Heart left ventricle (tissue), 16 donors: ENCODE measurements at regions of chr1 and their contacts with region 1.

Region 1: DNA sequence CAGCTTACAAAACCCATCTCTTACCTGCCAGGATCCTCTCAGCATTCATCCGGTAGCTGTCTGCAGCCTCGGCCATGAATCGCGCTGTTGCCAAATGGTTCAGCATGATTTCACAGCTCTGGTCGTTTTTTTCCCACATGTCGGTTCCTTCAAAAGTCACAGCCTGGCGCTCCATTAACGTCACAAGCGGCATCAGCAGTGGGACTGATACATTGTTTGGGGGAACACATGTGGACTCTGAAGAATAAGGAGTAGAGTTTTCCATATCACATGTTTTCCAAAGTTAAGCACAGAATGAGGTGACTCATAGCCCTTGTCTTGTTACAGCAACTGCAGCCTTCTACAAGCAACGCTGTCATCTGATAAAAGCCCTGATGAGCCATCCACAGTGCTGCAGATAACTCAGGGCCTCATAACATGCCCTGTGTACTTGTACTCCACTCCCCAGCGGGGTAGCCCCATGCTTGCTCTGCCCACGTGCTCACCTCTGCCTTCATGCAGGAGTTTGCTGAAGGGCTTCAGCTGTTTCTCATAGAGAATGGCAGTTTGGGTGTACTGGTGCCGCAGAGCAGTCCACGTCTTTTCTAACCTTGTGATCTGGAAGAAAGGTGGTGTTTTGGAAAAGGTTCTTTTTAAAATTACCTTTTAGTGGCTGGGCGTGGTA is 114.2 kb downstream of the BCAR3 start:
- DNase-seq: peak in 1 of 5 donors; percentile 74
- ATAC-seq: peak; percentile 62 to 85 (median 76)
- H3K4me3 ChIP-seq: no peak overlapping the region
- H3K27ac ChIP-seq: peak overlapping the region in 10 of 12 donors; percentile 24 to 76 (median 56)
- H3K4me1 ChIP-seq: peaks cover 8 to 28% (median 16%) of the 10 kb centered on the region in 12 donors
- H3K27me3 ChIP-seq: no peaks in the 10 kb centered on the region
- CTCF ChIP-seq: no peak
- POLR2A ChIP-seq: no peak

Region 2: DNA sequence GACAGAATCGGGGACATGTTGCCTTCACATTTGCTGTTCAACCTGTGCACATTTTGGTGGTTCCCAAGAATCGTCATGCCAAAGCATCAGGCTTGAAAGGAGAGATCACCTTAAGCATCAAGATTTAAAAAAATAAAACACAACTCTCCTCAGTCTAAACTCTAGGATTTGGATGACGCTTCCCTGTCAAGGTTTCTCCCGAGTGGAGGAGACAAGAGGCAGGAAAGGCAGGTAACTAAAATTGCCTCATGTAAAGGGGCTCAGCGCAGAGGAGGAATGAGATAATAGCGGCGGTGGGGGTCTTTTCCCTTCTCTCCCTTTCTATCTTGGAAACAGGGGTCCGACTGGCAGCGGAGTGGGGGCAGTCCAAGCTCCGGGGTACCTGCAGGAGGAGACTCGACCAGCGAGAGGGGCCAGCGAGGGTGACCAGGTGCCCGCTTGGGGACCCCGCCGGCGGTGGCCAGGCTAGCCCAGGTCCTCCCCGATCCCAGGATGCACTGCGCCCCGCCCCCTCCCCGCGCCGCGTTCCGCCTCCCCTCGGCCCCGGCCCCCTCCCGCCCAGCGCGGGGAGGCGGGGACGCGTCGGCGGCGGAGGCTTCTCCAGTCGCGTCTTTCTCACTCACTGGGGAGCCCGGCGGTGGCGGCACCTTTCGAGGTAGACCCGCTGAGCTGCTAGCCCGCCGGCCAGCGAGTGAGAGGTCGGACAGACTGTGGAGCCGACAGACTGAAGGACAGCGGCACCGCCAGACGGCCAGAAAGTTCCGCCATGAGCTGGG is 119.7 kb before region 1 on chr1 and contains the start of gene FNBP1L:
- intact Hi-C with region 1: loop called in 4 of 10 experiments (anchors 5 to 10 kb)
- DNase-seq: peak; percentile 83 to 87 (median 85)
- ATAC-seq: peak; percentile 83 to 96 (median 96)
- H3K4me3 ChIP-seq: peak within 1 kb of the TSS; percentile 70 to 100 (median 95)
- H3K27ac ChIP-seq: peak within 1 kb of the TSS; percentile 54 to 95 (median 89)
- H3K4me1 ChIP-seq: peaks cover 0 to 30% (median 9%) of the 10 kb centered on the region in 12 donors
- H3K27me3 ChIP-seq: no peaks in the 10 kb centered on the region
- CTCF ChIP-seq: no peak
- POLR2A ChIP-seq: peak in 1 of 2 donors; percentile 65
- total RNA-seq, gene FNBP1L: 20.5 to 38.8 (median 25.5) TPM

Region 3: DNA sequence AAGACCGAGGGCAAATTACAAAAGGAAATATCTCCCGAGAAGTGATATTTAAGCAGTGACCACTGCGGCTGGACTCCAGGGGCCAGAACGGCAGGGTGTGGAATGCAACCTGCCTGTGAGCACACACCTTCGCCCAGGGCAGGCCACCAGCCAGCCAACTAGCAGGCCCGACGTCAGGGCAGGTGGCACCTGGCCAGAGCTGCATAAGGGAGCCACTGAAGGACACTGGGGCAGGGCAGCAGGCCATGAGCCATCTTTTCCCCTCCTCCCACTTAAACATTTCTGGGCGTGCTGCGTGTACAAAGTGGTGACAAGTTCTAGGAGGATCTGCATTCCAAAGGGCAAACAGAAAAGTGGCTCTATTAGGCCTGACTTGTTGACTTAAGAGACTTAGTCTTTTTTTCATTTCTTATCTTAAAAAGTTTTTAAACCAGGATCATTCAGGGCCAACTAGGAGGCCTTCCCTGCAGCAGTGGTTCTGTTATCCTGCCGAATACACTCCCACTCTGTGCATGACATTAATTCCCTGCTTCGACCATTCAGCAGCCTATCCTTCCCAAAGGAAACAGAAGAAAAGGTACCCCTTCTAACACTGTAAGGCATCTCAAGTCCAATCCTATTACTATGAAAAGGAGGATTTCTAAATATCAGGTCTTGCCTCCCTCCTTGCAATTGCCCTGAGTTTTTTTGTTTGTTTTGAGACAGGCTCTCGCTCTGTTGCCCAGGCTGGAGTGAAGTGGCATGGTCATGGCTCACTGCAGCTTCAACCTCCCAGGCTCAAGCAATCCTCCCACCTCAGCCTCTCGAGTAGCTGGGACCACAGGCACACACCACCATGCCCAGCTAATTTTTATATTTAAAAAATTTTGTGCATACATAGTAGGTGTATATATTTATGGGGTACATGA is 17.9 kb after region 1 on chr1:
- intact Hi-C with region 1: loop called in 1 of 10 experiments (anchors 1 kb)
- DNase-seq: peak; percentile 83 to 95 (median 90)
- ATAC-seq: peak; percentile 89 to 94 (median 91)
- H3K4me3 ChIP-seq: peak overlapping the region in 5 of 12 donors; percentile 1 to 35 (median 20)
- H3K27ac ChIP-seq: peak overlapping the region; percentile 64 to 92 (median 82)
- H3K4me1 ChIP-seq: peaks cover 0 to 55% (median 25%) of the 10 kb centered on the region in 12 donors
- H3K27me3 ChIP-seq: no peaks in the 10 kb centered on the region
- CTCF ChIP-seq: no peak
- POLR2A ChIP-seq: no peak